ENCODE measurements at regions of chr11 and their contacts with region 1.

Region 1: DNA sequence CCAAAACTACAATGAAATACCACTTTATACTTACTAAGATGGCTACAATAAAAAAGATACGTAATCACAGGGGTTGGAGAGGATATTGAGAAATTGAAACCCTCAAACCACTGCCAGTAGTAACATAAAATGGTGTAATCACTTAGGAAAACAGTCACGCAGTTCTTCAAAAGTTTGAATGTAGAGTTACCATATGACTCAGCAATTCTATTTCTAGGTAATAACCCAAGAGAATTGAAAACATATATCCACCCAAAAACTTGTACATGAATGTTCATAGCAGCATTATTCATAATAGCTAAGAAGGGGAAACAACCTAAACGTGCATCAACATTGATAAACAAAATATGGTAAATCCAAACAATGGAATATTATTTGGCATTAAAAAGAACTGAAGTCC is 24.4 kb upstream of the PSMA1 start:
- DNase-seq: no peak
- H3K4me3 Mint-ChIP-seq: no peak overlapping the region
- H3K27ac Mint-ChIP-seq: no peak overlapping the region
- H3K4me1 Mint-ChIP-seq: peaks cover 52% of the 10 kb centered on the region
- H3K27me3 Mint-ChIP-seq: no peaks in the 10 kb centered on the region

Region 2: GRCh38 chr11:14554959-14555358 is 10.3 kb after region 1 on chr11:
- CTCF ChIA-PET with region 1: interaction called, 4 read pairs
- intact Hi-C with region 1: loop called (anchors 1 kb)
- DNase-seq: peak; percentile 38
- H3K4me3 Mint-ChIP-seq: no peak overlapping the region
- H3K27ac Mint-ChIP-seq: peak overlapping the region; percentile 63
- H3K4me1 Mint-ChIP-seq: peaks cover 35% of the 10 kb centered on the region
- H3K27me3 Mint-ChIP-seq: no peaks in the 10 kb centered on the region

Region 3: GRCh38 chr11:14578541-14578956 is 33.9 kb after region 1 on chr11:
- CTCF ChIA-PET with region 1: no interaction called
- intact Hi-C with region 1: loop called (anchors 1 kb)
- DNase-seq: peak; percentile 67
- H3K4me3 Mint-ChIP-seq: peak overlapping the region; percentile 11
- H3K27ac Mint-ChIP-seq: peak overlapping the region; percentile 75
- H3K4me1 Mint-ChIP-seq: peaks cover 47% of the 10 kb centered on the region
- H3K27me3 Mint-ChIP-seq: no peaks in the 10 kb centered on the region

Region 4: GRCh38 chr11:14611939-14612338 is 67.3 kb after region 1 on chr11:
- CTCF ChIA-PET with region 1: no interaction called
- intact Hi-C with region 1: loop called (anchors 2 kb)
- DNase-seq: peak; percentile 54
- H3K4me3 Mint-ChIP-seq: no peak overlapping the region
- H3K27ac Mint-ChIP-seq: peak overlapping the region; percentile 74
- H3K4me1 Mint-ChIP-seq: peaks cover 32% of the 10 kb centered on the region
- H3K27me3 Mint-ChIP-seq: no peaks in the 10 kb centered on the region

Region 5: GRCh38 chr11:14636119-14636518 is 91.5 kb after region 1 on chr11:
- CTCF ChIA-PET with region 1: no interaction called
- intact Hi-C with region 1: loop called (anchors 1 kb)
- DNase-seq: peak; percentile 32
- H3K4me3 Mint-ChIP-seq: peak overlapping the region; percentile 1
- H3K27ac Mint-ChIP-seq: peak overlapping the region; percentile 68
- H3K4me1 Mint-ChIP-seq: peaks cover 61% of the 10 kb centered on the region
- H3K27me3 Mint-ChIP-seq: no peaks in the 10 kb centered on the region

Region 6: DNA sequence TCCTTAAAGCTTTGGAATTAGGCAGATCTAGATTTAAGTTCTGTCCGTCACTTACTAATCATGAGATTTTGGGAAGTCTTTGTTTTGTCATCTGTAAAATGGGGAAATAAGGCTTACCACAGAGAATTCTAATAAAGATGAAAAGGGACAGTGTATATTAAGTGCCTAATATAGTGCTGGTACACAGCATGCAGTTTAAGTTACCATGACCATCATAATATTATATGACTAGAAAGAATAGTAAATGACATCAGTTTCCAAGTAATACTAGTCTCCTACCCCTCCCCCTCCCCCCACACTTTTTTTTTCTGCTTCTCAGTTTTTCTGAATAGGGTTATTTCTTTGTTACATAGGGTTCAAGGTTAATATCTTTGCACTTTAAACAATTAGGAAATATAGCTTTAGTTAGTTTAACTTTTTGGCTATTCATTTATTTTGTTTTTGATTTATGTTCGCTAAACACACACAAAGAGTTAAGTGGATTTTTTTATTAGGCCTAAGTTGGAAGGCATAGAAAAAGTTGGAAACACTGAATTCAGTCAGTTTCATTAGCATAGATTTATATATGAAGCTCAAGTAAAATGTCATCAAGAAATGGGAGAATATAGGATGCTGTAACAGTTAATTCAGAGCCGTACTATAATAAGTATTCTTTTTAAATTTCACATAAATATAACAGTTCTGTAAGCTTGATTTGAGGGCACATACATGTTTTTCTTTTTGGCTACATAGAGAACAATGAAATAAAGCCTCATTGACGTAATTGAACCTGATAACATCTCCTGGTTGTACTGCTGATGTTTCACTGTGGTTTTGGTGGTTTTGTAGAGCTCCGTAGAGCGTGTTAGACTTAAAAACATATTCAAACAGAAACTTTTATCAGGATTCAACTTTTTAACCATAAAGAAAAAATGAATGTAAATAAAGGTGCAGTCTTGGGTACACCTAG is 220.2 kb after region 1 on chr11:
- CTCF ChIA-PET with region 1: interaction called, 3 read pairs
- intact Hi-C with region 1: loop called (anchors 1 kb)
- DNase-seq: peak; percentile 58
- H3K4me3 Mint-ChIP-seq: peak overlapping the region; percentile 41
- H3K27ac Mint-ChIP-seq: no peak overlapping the region
- H3K4me1 Mint-ChIP-seq: peaks cover 45% of the 10 kb centered on the region
- H3K27me3 Mint-ChIP-seq: no peaks in the 10 kb centered on the region

Region 7: DNA sequence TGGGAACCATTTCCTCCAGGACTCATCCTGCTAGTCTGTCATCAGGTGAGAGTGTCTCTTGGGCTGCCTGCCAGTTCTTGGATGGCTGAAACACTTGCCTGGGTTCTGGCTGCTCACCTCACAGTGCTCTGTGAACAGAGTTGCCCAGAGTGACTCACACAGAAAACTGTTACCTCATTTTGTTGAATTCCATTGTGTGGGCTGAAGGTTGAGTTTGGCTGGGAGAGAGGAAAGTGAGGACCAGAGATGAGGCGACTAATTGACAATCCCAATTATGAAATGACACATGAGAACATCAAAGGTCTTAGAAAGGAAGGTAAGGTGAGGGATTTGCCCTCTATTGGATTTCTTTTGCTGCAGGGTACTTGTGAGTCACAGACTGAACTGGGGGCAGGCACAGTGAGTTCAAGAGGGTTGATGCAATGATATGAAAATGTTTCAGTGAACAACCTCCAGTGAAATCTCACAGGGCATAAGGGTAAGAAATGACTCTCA is 508.6 kb after region 1 on chr11:
- CTCF ChIA-PET with region 1: no interaction called
- intact Hi-C with region 1: loop called (anchors 5 kb)
- DNase-seq: peak; percentile 75
- H3K4me3 Mint-ChIP-seq: no peak overlapping the region
- H3K27ac Mint-ChIP-seq: peak overlapping the region; percentile 83
- H3K4me1 Mint-ChIP-seq: peaks cover 26% of the 10 kb centered on the region
- H3K27me3 Mint-ChIP-seq: peaks cover 2% of the 10 kb centered on the region